ENCODE measurements at regions of chr9 and their contacts with region 1.

Region 1: DNA sequence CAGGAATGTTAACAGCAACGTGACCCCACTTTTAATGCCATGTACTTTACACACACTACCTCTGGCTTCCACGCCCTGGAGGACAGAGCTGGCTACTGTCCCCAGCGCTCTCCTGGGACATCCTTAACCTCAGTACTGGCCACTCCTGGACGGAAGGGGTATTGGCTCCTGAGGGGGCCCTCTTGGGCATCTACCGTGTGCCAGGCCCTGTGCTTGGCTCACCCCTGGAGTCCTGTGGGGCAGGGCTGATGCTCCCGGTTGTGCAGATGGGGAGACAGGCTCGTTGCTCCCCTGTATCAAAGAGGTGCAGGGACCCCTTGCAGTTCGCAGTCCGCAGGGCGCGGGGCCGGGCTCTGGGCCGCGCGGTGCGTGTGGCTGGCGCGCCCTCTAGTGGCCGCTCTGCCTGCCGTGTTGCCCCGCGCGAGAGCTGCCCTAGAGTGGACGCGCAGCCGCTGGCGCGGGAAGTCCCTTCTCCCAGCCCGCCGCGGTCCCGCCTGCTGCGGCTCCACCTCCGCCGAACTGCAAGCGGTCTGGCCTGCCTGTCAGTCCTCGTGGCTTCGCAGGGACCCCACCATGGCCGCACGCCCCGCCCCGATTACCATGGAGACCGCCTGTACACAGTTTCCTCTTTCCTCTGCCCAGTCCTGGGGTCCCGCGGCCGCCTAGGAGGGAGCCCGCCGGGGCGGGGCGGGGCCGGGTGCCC is at the start of gene WDR38:
- DNase-seq: no peak
- H3K4me3 ChIP-seq: peak within 1 kb of the TSS; percentile 46
- H3K27me3 ChIP-seq: peaks cover 3% of the 10 kb centered on the region; the same call in 1 of the 2 replicates
- CTCF ChIP-seq: peak; percentile 88
- polyA plus RNA-seq, gene WDR38: not detected in 2 replicates

Region 2: GRCh38 chr9:124450931-124451661 is 401.9 kb before region 1 on chr9:
- CTCF ChIA-PET with region 1: no interaction called
- POLR2A ChIA-PET with region 1: no interaction called
- DNase-seq: no peak
- H3K4me3 ChIP-seq: no peak overlapping the region
- H3K27me3 ChIP-seq: peaks cover 24% of the 10 kb centered on the region
- CTCF ChIP-seq: no peak

Region 3: GRCh38 chr9:124786881-124787573 is 66.0 kb before region 1 on chr9:
- CTCF ChIA-PET with region 1: interaction called, 1,161 read pairs
- POLR2A ChIA-PET with region 1: no interaction called
- DNase-seq: no peak
- H3K4me3 ChIP-seq: no peak overlapping the region
- H3K27me3 ChIP-seq: no peaks in the 10 kb centered on the region
- CTCF ChIP-seq: no peak

Region 4: GRCh38 chr9:124812401-124813016 is 40.5 kb before region 1 on chr9:
- CTCF ChIA-PET with region 1: interaction called, 46 read pairs
- POLR2A ChIA-PET with region 1: no interaction called
- DNase-seq: peak; percentile 98
- H3K4me3 ChIP-seq: no peak overlapping the region
- H3K27me3 ChIP-seq: no peaks in the 10 kb centered on the region
- CTCF ChIP-seq: peak; percentile 24; the same call in 1 of the 2 replicates

Region 5: GRCh38 chr9:124839612-124840299 is 13.2 kb before region 1 on chr9:
- CTCF ChIA-PET with region 1: interaction called, 236 read pairs
- POLR2A ChIA-PET with region 1: no interaction called
- DNase-seq: no peak
- H3K4me3 ChIP-seq: no peak overlapping the region
- H3K27me3 ChIP-seq: no peaks in the 10 kb centered on the region
- CTCF ChIP-seq: peak; percentile 62

Region 6: DNA sequence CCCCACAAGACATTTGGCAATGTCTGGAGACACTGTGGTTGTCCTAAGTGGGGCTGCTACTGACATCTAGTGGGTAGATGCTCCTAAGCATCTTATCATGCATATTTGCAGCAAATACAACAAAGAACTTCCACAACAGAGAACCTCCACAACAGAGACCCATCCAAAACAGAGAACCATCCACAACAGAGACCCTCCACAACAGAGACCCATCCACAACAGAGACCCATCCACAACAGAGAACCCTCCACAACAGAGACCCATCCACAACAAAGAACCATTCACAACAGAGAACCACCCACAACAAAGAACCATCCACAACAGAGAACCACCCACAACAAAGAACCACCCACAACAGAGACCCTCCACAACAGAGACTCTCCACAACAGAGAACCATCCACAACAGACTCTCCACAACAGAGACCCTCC is 41.8 kb after region 1 on chr9:
- CTCF ChIA-PET with region 1: interaction called, 10 read pairs
- POLR2A ChIA-PET with region 1: no interaction called
- DNase-seq: no peak
- H3K4me3 ChIP-seq: no peak overlapping the region
- H3K27me3 ChIP-seq: no peaks in the 10 kb centered on the region
- CTCF ChIP-seq: peak; percentile 67

Region 7: DNA sequence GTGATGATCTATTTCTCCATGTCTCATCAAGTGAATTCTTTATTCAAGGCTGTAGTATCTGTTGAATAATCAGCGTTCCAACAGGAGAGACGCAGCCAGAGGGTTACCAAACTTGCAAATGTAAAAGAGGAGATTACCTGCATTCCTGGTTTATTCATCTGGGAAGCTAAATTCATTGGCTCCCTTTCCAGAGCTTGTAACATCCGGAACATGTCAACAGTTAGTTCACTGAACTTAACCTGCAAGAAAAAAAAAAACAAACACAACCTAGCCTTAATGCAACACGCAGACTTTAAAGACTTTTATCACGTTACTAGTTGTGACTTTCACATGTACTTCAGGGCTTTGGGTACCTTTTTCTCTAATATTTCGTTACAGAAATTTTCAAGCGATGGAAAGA is 150.4 kb after region 1 on chr9:
- CTCF ChIA-PET with region 1: no interaction called
- POLR2A ChIA-PET with region 1: no interaction called
- DNase-seq: no peak
- H3K4me3 ChIP-seq: no peak overlapping the region
- H3K27me3 ChIP-seq: no peaks in the 10 kb centered on the region
- CTCF ChIP-seq: no peak

Region 8: DNA sequence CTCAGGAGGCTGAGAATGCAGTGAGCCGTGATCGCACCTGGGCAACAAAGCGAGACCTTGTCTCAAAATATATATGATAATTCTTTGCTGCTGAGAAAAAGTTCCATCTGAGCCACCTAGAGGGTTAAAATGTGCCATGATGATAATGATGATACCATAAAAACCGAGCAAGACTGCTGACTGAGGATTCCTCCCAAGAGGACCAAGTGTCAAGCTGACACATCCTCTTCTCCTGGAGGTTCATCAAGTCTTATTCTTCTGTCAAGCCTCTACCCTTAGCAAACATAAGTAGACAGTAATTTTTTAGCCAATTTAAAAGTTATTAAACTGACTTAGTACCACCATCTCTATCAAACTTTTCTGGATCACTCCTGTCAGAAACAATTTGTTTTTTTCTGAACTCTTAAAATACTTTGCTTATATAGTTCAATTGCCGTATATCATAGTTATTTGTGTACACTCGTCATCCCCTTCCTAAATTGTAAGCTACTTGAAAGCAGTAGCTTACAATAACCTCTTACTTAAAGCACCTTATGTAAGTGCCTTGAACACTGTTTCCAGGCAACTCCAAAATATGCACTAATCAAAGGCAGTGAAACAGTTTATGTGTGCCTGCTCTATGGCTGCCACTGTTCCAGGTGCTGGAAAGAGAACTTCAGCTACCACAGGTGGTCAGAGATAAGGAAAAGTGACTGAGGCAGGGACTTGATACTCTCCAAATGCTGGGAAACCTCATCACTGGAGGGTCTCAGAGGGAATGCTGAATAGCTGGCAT is 232.9 kb after region 1 on chr9:
- CTCF ChIA-PET with region 1: no interaction called
- POLR2A ChIA-PET with region 1: no interaction called
- DNase-seq: no peak
- H3K4me3 ChIP-seq: no peak overlapping the region
- H3K27me3 ChIP-seq: no peaks in the 10 kb centered on the region
- CTCF ChIP-seq: no peak

Measured in BJ (cell line).